B cell (primary cell): ENCODE measurements at regions of chr7 and their contacts with region 1.

Region 1: DNA sequence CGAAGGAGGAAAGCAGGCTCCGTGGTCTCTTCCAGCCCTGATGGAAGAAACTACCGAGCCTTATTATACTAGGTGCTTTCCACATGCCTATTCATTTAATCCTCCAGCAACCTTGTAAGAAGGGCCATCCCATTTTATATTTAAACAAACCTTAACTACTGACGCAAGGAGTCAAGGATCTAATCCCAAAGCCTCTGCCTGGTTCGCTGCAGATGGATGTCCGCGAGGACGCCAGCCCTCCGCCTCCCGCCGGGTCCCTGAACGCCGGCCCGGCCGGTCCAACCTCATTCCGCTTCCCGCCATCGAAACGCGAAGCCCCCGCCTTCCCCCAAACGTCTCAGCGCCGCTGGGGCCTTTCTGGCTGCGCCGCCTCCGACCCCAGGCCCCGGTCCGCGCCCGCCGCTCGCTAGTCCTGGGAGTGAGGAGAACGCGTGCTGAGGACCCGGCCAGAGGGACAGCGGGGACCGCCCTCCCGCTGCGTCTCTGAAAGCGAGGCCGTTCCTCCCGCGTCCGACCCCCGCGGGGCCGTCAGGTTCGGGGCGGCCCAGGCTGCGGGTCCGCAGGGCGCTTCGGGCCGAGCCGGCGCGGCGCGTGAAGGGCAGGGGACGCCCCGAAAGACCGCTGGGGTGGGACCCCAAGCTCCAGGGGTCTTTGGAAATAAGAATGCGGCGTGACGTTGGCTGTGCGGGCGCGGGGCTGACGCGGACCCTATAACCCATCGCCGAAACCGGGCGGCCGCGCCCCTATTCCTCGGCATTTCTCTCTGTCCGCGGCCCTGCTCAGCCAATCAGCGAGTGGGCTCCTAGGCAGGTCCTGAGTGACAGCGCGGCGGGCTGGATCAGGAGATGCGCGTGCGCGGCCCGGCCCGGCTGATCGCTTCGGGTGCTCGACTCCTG is at the start of gene ATP6V0E2:
- DNase-seq: peak; percentile 92
- ATAC-seq: peak; percentile 95
- H3K4me3 ChIP-seq: peak within 1 kb of the TSS; percentile 3 to 90 (median 73)
- H3K4me3 Mint-ChIP-seq: peak within 1 kb of the TSS; percentile 90
- H3K27ac ChIP-seq: peak within 1 kb of the TSS; percentile 41 to 66
- H3K27ac Mint-ChIP-seq: peak within 1 kb of the TSS; percentile 73
- H3K4me1 ChIP-seq: peaks cover 39 to 41% of the 10 kb centered on the region in 2 donors
- H3K4me1 Mint-ChIP-seq: peaks cover 40% of the 10 kb centered on the region
- H3K27me3 ChIP-seq: no peaks in the 10 kb centered on the region
- H3K27me3 Mint-ChIP-seq: no peaks in the 10 kb centered on the region
- CTCF ChIP-seq: no peak
- total RNA-seq, gene ATP6V0E2: 13.5 and 15.4 TPM in 2 replicates

Region 2: DNA sequence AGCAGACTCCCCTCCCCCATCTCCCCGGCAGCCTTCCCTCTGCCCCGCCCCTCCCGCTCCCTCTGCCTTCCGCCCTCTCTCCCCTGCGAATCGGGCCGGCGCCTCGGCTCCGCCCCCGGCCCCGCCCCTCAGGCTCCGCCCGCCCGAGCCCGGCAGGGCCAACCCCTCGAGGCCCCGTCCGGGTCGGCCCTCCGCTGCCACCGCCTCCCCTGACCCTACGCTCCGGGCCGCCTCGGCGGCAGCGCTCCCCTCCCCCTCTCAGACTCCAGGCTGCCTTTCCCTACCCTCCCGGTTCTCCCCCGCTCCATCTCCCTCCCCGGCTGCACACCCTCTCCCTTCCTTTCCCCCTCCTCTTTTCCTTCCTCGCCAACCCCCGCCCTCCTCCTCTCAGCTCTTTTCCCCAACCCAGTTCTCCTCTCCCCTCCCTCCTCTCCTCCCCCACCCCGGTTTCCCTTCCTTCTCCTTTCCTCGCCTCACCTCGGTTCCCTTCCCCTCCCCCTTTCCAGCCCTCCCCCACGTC is 101.5 kb before region 1 on chr7:
- CTCF ChIA-PET with region 1: no interaction called
- POLR2A ChIA-PET with region 1: no interaction called
- intact Hi-C with region 1: loop called (anchors 1 kb)
- DNase-seq: peak; percentile 89
- ATAC-seq: peak; percentile 97
- H3K4me3 ChIP-seq: peak overlapping the region in 4 of 5 experiments; percentile 53 to 74 (median 64)
- H3K4me3 Mint-ChIP-seq: peak overlapping the region; percentile 78
- H3K27ac ChIP-seq: no peak overlapping the region
- H3K27ac Mint-ChIP-seq: no peak overlapping the region
- H3K4me1 ChIP-seq: peaks cover 7 to 19% of the 10 kb centered on the region in 2 donors
- H3K4me1 Mint-ChIP-seq: peaks cover 9% of the 10 kb centered on the region
- H3K27me3 ChIP-seq: peaks cover 0 to 19% (median 1%) of the 10 kb centered on the region in 4 experiments
- H3K27me3 Mint-ChIP-seq: peaks cover 10% of the 10 kb centered on the region
- CTCF ChIP-seq: no peak

Region 3: GRCh38 chr7:149854611-149855360 is 18.5 kb before region 1 on chr7:
- CTCF ChIA-PET with region 1: no interaction called
- POLR2A ChIA-PET with region 1: no interaction called
- intact Hi-C with region 1: no loop called
- DNase-seq: no peak
- ATAC-seq: no peak
- H3K4me3 ChIP-seq: no peak overlapping the region
- H3K4me3 Mint-ChIP-seq: no peak overlapping the region
- H3K27ac ChIP-seq: no peak overlapping the region
- H3K27ac Mint-ChIP-seq: no peak overlapping the region
- H3K4me1 ChIP-seq: no peaks in the 10 kb centered on the region
- H3K4me1 Mint-ChIP-seq: no peaks in the 10 kb centered on the region
- H3K27me3 ChIP-seq: no peaks in the 10 kb centered on the region
- H3K27me3 Mint-ChIP-seq: no peaks in the 10 kb centered on the region
- CTCF ChIP-seq: no peak

Region 4: GRCh38 chr7:150502519-150502918 is 629.2 kb after region 1 on chr7:
- CTCF ChIA-PET with region 1: no interaction called
- POLR2A ChIA-PET with region 1: no interaction called
- intact Hi-C with region 1: no loop called
- DNase-seq: no peak
- ATAC-seq: no peak
- H3K4me3 ChIP-seq: no peak overlapping the region
- H3K4me3 Mint-ChIP-seq: no peak overlapping the region
- H3K27ac ChIP-seq: no peak overlapping the region
- H3K27ac Mint-ChIP-seq: no peak overlapping the region
- H3K4me1 ChIP-seq: no peaks in the 10 kb centered on the region
- H3K4me1 Mint-ChIP-seq: no peaks in the 10 kb centered on the region
- H3K27me3 ChIP-seq: no peaks in the 10 kb centered on the region
- H3K27me3 Mint-ChIP-seq: peaks cover 9% of the 10 kb centered on the region
- CTCF ChIP-seq: no peak